Sigmoid colon (tissue), 7 donors: ENCODE measurements at regions of chr14 and their contacts with region 1.

Region 1: DNA sequence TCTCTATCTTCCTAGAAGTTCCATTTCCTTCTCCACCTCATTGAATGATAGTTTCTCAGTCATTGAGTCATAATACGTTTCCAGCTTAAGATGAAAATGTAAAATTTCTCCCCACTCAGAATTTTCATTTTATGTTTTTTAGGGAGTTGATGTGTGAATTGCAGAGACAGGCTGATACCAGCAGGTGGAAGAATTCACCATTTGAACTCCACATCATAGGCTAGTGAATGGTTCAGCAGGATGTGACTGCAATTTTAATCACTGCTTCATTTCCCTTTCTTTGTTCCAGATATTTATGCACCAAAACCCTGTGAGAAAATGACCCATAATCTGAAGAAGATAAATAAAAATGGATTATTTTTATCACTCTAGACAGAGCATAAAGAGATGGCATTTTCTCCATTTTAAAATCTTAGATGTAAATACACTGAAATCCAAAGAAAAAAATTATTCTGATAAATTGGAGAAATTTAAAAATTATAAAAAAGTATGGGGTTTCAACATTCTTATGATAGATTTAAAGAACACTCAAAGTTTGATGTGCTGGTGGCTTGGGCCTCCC is 10.6 kb upstream of the PYGL start:
- DNase-seq: no peak
- H3K4me3 ChIP-seq: no peak overlapping the region
- H3K27ac ChIP-seq: peak overlapping the region in 3 of 4 donors; percentile 56 to 81 (median 73)
- H3K4me1 ChIP-seq: peaks cover 0 to 12% (median 10%) of the 10 kb centered on the region in 4 donors
- H3K27me3 ChIP-seq: no peaks in the 10 kb centered on the region
- CTCF ChIP-seq: peak; percentile 74 to 84 (median 79)
- EP300 ChIP-seq: no peak
- POLR2A ChIP-seq: no peak

Region 2: DNA sequence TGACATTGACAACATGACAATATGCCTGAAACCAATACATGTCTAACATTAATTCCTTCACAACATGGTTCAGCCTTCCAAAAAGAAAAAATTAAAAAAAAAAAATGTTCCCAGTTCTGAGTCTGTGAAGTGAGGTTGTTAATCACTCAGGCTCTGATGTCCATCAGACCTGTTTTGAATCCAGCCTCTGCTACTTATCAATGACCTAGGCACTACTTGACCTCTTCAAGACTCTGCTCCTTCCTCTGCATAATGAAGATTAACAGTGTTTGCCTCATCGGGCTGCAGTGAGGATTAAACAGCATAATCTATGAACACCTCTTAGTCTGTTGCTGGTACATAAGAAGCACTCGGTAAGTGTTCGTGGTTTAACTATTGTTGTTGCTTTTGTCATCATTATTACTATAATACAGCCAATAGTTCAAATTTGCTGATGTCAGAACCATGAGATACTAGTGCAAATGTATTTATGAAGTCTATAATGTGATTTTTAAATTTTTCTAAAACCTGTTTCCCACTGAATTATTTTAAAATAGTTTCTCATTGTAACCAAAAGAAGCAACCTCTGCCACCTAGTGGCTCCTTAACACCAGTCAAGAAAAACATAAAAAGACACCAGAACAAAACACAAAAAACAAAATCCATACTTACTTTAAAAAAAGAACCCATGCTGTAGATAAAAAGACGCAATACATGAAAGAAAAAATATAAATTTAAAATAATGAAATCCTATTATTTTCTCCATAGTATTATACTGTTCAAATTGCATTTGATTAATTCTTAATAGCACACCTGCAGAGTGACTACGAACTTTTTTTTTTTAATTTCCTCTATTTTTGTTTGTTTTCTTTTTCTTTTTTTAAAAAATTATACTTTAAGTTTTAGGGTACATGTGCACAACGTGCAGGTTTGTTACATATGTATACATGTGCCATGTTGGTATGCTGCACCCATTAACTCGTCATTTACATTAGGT is 264.9 kb after region 1 on chr14:
- intact Hi-C with region 1: loop called (anchors 1 kb)
- DNase-seq: no peak
- H3K4me3 ChIP-seq: no peak overlapping the region
- H3K27ac ChIP-seq: no peak overlapping the region
- H3K4me1 ChIP-seq: no peaks in the 10 kb centered on the region
- H3K27me3 ChIP-seq: no peaks in the 10 kb centered on the region
- CTCF ChIP-seq: peak; percentile 34 to 67 (median 62)
- EP300 ChIP-seq: no peak
- POLR2A ChIP-seq: no peak